Esophagus squamous epithelium (tissue), 5 donors: ENCODE measurements at regions of chr2 and their contacts with region 1.

Region 1: GRCh38 chr2:191501561-191502168 is 176.3 kb upstream of the NABP1 start:
- DNase-seq: no peak
- H3K4me3 ChIP-seq: no peak overlapping the region
- H3K27ac ChIP-seq: peak overlapping the region in 2 of 4 donors; percentile 15 to 44
- H3K4me1 ChIP-seq: peaks cover 0 to 19% (median 17%) of the 10 kb centered on the region in 3 donors
- H3K27me3 ChIP-seq: no peaks in the 10 kb centered on the region
- CTCF ChIP-seq: peak; percentile 26 to 66 (median 46)
- POLR2A ChIP-seq: no peak

Region 2: GRCh38 chr2:191051825-191052778 is 449.6 kb before region 1 on chr2:
- intact Hi-C with region 1: loop called (anchors 10 kb)
- DNase-seq: no peak
- H3K4me3 ChIP-seq: no peak overlapping the region
- H3K27ac ChIP-seq: no peak overlapping the region
- H3K4me1 ChIP-seq: peaks cover 0 to 7% (median 0%) of the 10 kb centered on the region in 3 donors
- H3K27me3 ChIP-seq: peaks cover 0 to 10% (median 0%) of the 10 kb centered on the region in 4 donors
- CTCF ChIP-seq: peak; percentile 26 to 75 (median 58)
- POLR2A ChIP-seq: no peak

Region 3: GRCh38 chr2:191165176-191165643 is 336.5 kb before region 1 on chr2:
- intact Hi-C with region 1: loop called (anchors 5 kb)
- DNase-seq: no peak
- H3K4me3 ChIP-seq: no peak overlapping the region
- H3K27ac ChIP-seq: no peak overlapping the region
- H3K4me1 ChIP-seq: peaks cover 0 to 50% (median 32%) of the 10 kb centered on the region in 3 donors
- H3K27me3 ChIP-seq: no peaks in the 10 kb centered on the region
- CTCF ChIP-seq: peak; percentile 40 to 69 (median 52)
- POLR2A ChIP-seq: no peak

Region 4: GRCh38 chr2:191446910-191447309 is 54.8 kb before region 1 on chr2:
- intact Hi-C with region 1: no loop called
- DNase-seq: no peak
- H3K4me3 ChIP-seq: no peak overlapping the region
- H3K27ac ChIP-seq: no peak overlapping the region
- H3K4me1 ChIP-seq: peaks cover 0 to 5% (median 0%) of the 10 kb centered on the region in 3 donors
- H3K27me3 ChIP-seq: no peaks in the 10 kb centered on the region
- CTCF ChIP-seq: no peak
- POLR2A ChIP-seq: no peak

Region 5: DNA sequence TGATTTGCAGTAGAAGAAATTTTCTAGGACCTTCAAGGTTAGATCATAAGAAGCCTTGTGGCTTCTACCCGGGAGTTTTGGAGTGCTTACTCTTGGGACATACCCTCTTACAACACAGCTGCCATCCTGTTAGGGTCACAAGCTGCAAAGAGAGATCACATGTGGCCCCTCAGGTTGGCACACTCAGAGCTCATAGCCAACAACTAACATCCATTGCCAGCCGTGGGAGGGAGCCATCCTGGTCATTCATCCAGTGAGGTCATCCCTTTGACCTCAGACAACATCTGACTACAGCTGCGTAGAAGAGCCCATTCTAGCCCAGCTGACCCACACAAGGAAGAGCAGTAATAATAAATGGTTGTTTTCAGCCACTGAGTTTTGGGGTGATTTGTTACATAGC is 99.4 kb after region 1 on chr2:
- intact Hi-C with region 1: no loop called
- DNase-seq: no peak
- H3K4me3 ChIP-seq: no peak overlapping the region
- H3K27ac ChIP-seq: no peak overlapping the region
- H3K4me1 ChIP-seq: no peaks in the 10 kb centered on the region
- H3K27me3 ChIP-seq: no peaks in the 10 kb centered on the region
- CTCF ChIP-seq: no peak
- POLR2A ChIP-seq: no peak

Region 6: DNA sequence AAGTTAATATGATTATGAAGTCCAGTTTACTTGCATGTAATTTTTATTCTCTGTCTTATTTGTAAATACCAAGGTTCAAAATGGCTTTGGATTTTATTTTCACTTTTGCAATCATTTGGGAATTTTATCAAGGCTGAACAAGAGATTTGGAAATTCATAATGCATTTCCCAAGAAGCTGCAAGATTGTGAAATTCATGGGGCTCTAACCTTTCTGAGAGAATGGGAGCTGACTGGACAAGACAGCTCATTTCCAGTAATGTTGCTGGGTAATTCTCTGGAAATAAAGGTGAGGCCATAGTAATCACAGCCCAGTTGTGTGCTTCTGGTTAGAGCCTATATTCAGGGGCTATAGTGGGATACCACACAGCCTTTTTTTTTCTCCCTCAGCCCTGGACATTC is 154.7 kb after region 1 on chr2:
- intact Hi-C with region 1: no loop called
- DNase-seq: no peak
- H3K4me3 ChIP-seq: no peak overlapping the region
- H3K27ac ChIP-seq: peak overlapping the region in 3 of 4 donors; percentile 27 to 61 (median 48)
- H3K4me1 ChIP-seq: peaks cover 0 to 15% (median 4%) of the 10 kb centered on the region in 3 donors
- H3K27me3 ChIP-seq: no peaks in the 10 kb centered on the region
- CTCF ChIP-seq: no peak
- POLR2A ChIP-seq: no peak

Region 7: DNA sequence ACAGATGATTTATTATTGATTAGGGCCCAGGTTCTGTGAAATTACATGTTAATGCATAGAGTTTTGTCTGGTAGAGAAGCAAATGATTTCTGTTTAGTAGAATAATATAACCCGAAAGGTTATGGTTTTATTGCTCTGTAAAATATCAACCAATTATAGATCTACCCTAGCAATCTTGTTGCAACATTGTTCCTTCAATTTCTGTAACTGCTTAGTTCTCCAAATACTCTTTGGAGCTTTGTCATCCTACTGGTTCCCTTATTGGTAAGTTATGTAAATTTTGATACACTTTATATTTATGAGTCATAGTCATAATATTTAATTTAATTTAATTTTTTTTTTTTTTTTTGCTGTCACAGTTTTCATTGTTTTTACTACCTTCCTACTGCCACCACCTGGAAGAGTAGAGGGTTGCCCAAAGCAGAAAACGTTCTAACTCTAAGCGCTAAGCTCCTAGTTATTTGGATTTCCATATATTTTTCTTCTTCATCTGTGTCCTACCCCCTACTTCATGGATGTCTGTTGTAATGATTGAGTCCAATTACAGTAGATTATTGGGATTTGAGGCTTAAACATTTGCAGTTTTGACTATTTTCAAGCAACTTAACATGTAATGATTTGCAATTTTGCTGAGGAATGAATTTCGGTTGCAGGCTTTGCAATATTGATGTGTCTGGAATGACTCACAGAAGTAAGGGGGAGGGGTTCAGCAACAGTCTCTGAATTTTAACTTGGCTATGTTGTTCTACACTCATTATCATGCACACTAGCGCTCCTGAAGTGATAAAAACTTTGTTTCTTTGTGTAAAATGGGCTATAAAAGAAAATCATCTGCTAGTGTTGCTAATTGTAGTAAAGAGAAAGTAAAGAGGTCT is 227.3 kb after region 1 on chr2:
- intact Hi-C with region 1: no loop called
- DNase-seq: no peak
- H3K4me3 ChIP-seq: no peak overlapping the region
- H3K27ac ChIP-seq: no peak overlapping the region
- H3K4me1 ChIP-seq: no peaks in the 10 kb centered on the region
- H3K27me3 ChIP-seq: peaks cover 0 to 12% (median 0%) of the 10 kb centered on the region in 4 donors
- CTCF ChIP-seq: no peak
- POLR2A ChIP-seq: no peak